Esophagus squamous epithelium (tissue), 5 donors: ENCODE measurements at regions of chr14 and their contacts with region 1.

Region 1: GRCh38 chr14:70821584-70822529 is 12.5 kb upstream of the MAP3K9 start:
- DNase-seq: no peak
- H3K4me3 ChIP-seq: peak overlapping the region; percentile 62 to 74 (median 62)
- H3K27ac ChIP-seq: peak overlapping the region; percentile 22 to 52 (median 32)
- H3K4me1 ChIP-seq: peaks cover 6 to 26% (median 13%) of the 10 kb centered on the region in 3 donors
- H3K27me3 ChIP-seq: peaks cover 0 to 33% (median 0%) of the 10 kb centered on the region in 4 donors
- CTCF ChIP-seq: no peak
- POLR2A ChIP-seq: peak in 1 of 4 donors; percentile 37

Region 2: DNA sequence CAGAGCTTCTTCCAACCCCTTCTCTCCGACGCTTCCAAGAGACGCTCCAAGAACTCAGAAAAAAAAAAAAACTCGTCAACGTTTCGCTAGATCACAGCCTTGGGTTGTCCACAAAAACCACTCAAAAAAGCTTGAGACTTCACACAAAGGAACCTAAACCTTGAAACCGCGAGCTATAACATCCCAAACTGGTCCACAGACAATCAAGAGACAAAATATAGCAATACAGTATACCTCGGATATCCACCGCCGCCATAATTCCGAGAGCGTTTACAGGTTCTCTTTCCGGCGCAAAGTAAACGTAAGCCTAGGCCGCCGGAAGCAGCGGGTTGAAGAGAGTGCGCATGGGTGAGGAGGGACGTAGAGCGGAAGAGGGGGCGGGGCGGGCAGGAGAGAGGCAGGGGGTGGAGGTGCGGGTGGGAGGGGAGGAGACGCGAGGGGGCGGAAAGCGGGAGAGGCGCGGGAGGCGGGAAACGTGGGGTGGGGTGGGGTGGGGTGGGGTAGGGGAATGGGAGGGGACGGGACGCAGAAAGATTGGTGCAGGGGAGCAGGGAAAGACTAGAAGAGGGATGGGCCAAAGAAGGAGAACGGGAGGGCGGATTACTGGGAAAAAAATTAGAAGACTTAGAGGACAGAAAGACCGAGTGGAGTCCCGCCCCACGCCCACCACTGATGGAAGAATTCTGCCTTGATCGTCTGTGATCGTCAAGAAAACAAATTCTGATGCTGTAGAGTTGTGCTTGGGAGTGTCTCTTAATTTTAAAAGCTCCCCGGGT is 221.3 kb before region 1 on chr14 and contains the start of gene MED6:
- intact Hi-C with region 1: no loop called
- DNase-seq: peak; percentile 72
- H3K4me3 ChIP-seq: peak within 1 kb of the TSS; percentile 62 to 94 (median 74)
- H3K27ac ChIP-seq: peak within 1 kb of the TSS; percentile 69 to 88 (median 84)
- H3K4me1 ChIP-seq: peaks cover 4 to 27% (median 11%) of the 10 kb centered on the region in 3 donors
- H3K27me3 ChIP-seq: peaks cover 0 to 4% (median 0%) of the 10 kb centered on the region in 4 donors
- CTCF ChIP-seq: no peak
- POLR2A ChIP-seq: peak in 1 of 4 donors; percentile 18
- total RNA-seq, gene MED6: 19.1 to 37.1 (median 30.2) TPM

Region 3: DNA sequence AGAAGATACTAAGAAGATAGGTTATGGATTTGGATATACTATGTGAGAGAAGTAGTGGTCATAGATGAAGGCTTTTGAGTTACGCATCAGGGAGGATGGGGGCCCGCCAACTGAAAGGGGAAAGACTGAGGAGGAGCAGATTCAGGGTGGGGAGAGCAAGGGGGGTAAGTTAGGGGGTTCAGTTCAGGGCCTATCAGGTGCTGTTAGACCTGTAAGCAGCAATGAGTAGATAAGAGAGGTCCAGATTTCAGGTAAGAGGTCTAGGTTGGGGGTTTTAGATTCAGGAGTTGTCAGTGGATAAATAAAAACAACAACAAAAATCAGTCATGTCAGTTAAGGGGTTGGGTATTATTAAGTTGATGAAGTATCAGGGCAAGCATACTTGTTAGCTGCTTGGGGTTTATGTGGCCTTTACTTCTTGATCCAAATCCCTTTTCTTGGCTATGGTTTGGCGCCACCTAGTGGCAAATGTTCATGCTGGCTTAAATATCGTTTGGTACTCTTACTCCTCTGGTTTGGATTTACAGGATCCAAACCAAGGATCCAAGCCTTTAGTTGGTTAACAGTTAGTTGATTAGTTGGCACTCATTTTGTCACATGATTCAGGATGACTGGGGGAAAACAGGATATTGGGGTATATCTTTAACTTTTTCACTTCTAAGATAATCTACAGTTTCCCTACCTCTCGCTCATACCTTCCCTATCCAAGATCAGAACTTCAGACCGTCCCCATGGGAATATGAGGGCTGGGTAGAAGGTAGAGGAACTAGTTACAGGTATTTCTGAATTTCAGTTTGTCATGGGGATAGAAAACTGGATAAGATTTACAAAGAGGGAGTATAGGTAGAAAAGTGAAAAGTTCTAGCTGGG is 150.5 kb after region 1 on chr14:
- intact Hi-C with region 1: loop called (anchors 10 kb)
- DNase-seq: no peak
- H3K4me3 ChIP-seq: no peak overlapping the region
- H3K27ac ChIP-seq: no peak overlapping the region
- H3K4me1 ChIP-seq: peaks cover 0 to 8% (median 0%) of the 10 kb centered on the region in 3 donors
- H3K27me3 ChIP-seq: no peaks in the 10 kb centered on the region
- CTCF ChIP-seq: peak; percentile 80 to 92 (median 89)
- POLR2A ChIP-seq: no peak